HepG2 (cell line): ENCODE measurements at regions of chr2 and their contacts with region 1.

Region 1: GRCh38 chr2:111958901-111959300 is 60.5 kb downstream of the MERTK start:
- DNase-seq: no peak
- ATAC-seq: no peak
- H3K4me3 ChIP-seq: no peak overlapping the region
- H3K27ac ChIP-seq: no peak overlapping the region
- H3K4me1 ChIP-seq: peaks cover 70% of the 10 kb centered on the region
- H3K27me3 ChIP-seq: no peaks in the 10 kb centered on the region
- CTCF ChIP-seq: no peak
- EP300 ChIP-seq: no peak
- POLR2A ChIP-seq: no peak
- RAD21 ChIP-seq: no peak

Region 2: DNA sequence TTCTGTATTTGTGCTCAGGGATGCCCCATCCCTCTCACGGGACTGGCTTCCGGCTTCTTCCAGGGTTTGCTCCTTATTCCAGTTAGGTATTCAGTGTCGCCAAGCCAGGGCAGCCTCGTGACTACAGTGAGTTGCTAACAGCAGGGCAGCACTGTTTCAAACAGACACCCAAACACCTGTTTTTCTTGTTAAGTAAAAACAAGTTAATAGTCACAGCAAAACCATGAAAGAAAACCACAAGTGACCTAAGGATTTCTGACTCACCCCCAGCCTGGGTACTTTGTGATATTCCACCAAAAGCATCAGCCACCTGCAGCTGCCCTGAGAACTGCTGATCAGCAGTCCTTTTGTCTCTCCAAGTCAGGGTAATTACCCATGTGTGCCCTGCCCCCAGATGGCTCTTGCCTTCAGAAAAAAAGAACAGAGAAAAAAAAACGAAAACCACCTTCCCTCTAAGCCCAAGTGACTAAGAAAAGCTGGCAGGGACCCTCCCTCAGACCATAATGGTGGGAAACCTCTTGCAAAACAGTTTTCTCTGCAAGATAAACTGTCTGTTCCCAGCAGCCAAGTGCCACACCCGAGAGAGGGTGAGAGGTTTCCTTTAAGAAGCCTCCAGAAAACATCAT is 253.1 kb before region 1 on chr2:
- CTCF ChIA-PET with region 1: no interaction called
- POLR2A ChIA-PET with region 1: no interaction called
- in situ Hi-C with region 1: no loop called
- intact Hi-C with region 1: no loop called
- DNase-seq: peak; percentile 69
- ATAC-seq: peak; percentile 13; the same call in 1 of the 3 replicates
- H3K4me3 ChIP-seq: 0 out of 6 replicates have a peak overlapping the region, but pooled peaks of 1 of the 3 experiments have one; percentile 8
- H3K27ac ChIP-seq: no peak overlapping the region
- H3K4me1 ChIP-seq: peaks cover 48% of the 10 kb centered on the region
- H3K27me3 ChIP-seq: peaks cover 0 to 9% of the 10 kb centered on the region in 2 experiments; a peak in 4 of 5 replicates
- CTCF ChIP-seq: no peak
- EP300 ChIP-seq: no peak; a peak in 1 of 4 replicates
- POLR2A ChIP-seq: no peak
- RAD21 ChIP-seq: no peak

Region 3: GRCh38 chr2:111975053-111975552 is 16.2 kb after region 1 on chr2:
- CTCF ChIA-PET with region 1: no interaction called
- POLR2A ChIA-PET with region 1: no interaction called
- in situ Hi-C with region 1: no loop called
- intact Hi-C with region 1: loop called (anchors 1 kb)
- DNase-seq: peak; percentile 75
- ATAC-seq: peak; percentile 81
- H3K4me3 ChIP-seq: no peak overlapping the region
- H3K27ac ChIP-seq: peak overlapping the region; percentile 8
- H3K4me1 ChIP-seq: peaks cover 31% of the 10 kb centered on the region
- H3K27me3 ChIP-seq: no peaks in the 10 kb centered on the region
- CTCF ChIP-seq: no peak
- EP300 ChIP-seq: peak in 1 of 2 experiments; percentile 58; a peak in 2 of 4 replicates
- POLR2A ChIP-seq: no peak
- RAD21 ChIP-seq: no peak

Region 4: GRCh38 chr2:112006076-112006410 is 47.1 kb after region 1 on chr2:
- CTCF ChIA-PET with region 1: no interaction called
- POLR2A ChIA-PET with region 1: no interaction called
- in situ Hi-C with region 1: no loop called
- intact Hi-C with region 1: no loop called
- DNase-seq: no peak
- ATAC-seq: no peak
- H3K4me3 ChIP-seq: no peak overlapping the region
- H3K27ac ChIP-seq: no peak overlapping the region
- H3K4me1 ChIP-seq: no peaks in the 10 kb centered on the region
- H3K27me3 ChIP-seq: no peaks in the 10 kb centered on the region
- CTCF ChIP-seq: no peak
- EP300 ChIP-seq: no peak
- POLR2A ChIP-seq: no peak
- RAD21 ChIP-seq: no peak